ENCODE measurements at regions of chr11 and their contacts with region 1.

Region 1: GRCh38 chr11:35305670-35306382 is 113.5 kb downstream of the SLC1A2 start:
- DNase-seq: peak in 4 of 5 donors; percentile 35 to 49 (median 44)
- H3K4me3 ChIP-seq: no peak overlapping the region
- H3K4me3 Mint-ChIP-seq: peak overlapping the region; percentile 58 to 85 (median 79)
- H3K27ac ChIP-seq: no peak overlapping the region
- H3K27ac Mint-ChIP-seq: peak overlapping the region; percentile 8 to 95 (median 90)
- H3K4me1 ChIP-seq: peaks cover 24% of the 10 kb centered on the region
- H3K4me1 Mint-ChIP-seq: peaks cover 15 to 29% (median 25%) of the 10 kb centered on the region in 4 donors
- H3K27me3 ChIP-seq: no peaks in the 10 kb centered on the region
- H3K27me3 Mint-ChIP-seq: no peaks in the 10 kb centered on the region

Region 2: DNA sequence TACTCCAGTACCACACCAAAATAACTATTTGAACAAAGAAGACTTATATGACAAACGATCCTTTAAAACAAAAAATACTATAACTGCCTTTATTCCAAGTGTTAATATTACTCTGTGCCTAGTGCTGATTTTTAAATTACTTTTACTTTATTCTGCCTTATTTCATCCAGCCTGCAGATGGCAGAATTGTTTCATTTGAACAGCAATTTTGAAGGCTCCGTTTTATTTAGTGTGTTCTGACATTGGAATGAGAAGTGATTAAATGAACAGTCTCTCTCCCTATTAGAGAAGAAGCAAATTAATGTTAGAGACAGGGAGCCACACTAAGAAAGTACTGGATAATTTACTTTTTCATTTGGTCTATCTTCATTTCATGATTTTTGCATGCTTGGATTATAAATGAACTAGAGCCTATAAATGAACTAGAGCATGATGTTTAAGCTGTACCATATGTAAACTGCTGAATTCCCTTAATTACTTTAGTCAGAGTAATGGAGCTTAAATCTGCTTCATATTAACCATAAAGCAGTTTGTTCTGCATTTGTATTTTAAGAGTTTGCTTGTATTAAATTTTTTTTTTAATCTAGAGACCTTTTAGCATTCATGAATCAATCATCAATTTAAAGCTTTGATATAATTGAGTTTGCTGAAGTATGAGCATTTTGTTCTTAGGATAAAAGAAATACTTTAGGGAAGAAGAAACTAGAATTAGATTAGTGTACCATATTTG is 379.6 kb before region 1 on chr11:
- CTCF ChIA-PET with region 1: interaction called, 101 read pairs
- POLR2A ChIA-PET with region 1: interaction called, 4 read pairs
- intact Hi-C with region 1: loop called (anchors 1 kb)
- DNase-seq: peak in 4 of 5 donors; percentile 49 to 57 (median 54)
- H3K4me3 ChIP-seq: no peak overlapping the region
- H3K4me3 Mint-ChIP-seq: no peak overlapping the region
- H3K27ac ChIP-seq: no peak overlapping the region
- H3K27ac Mint-ChIP-seq: peak overlapping the region in 1 of 7 donors; percentile 78
- H3K4me1 ChIP-seq: no peaks in the 10 kb centered on the region
- H3K4me1 Mint-ChIP-seq: peaks cover 8 to 25% (median 15%) of the 10 kb centered on the region in 4 donors
- H3K27me3 ChIP-seq: no peaks in the 10 kb centered on the region
- H3K27me3 Mint-ChIP-seq: no peaks in the 10 kb centered on the region

Region 3: GRCh38 chr11:35158701-35159510 is 146.9 kb before region 1 on chr11:
- CTCF ChIA-PET with region 1: interaction called, 12 read pairs
- POLR2A ChIA-PET with region 1: interaction called, 4 read pairs
- intact Hi-C with region 1: loop called (anchors 5 kb)
- DNase-seq: peak in 1 of 5 donors; percentile 22
- H3K4me3 ChIP-seq: peak overlapping the region in 1 of 2 donors; percentile 8
- H3K4me3 Mint-ChIP-seq: peak overlapping the region; percentile 51 to 87 (median 70)
- H3K27ac ChIP-seq: peak overlapping the region; percentile 96
- H3K27ac Mint-ChIP-seq: peak overlapping the region; percentile 89 to 100 (median 100)
- H3K4me1 ChIP-seq: peaks cover 100% of the 10 kb centered on the region
- H3K4me1 Mint-ChIP-seq: peaks cover 93 to 100% (median 97%) of the 10 kb centered on the region in 4 donors
- H3K27me3 ChIP-seq: no peaks in the 10 kb centered on the region
- H3K27me3 Mint-ChIP-seq: no peaks in the 10 kb centered on the region

Region 4: DNA sequence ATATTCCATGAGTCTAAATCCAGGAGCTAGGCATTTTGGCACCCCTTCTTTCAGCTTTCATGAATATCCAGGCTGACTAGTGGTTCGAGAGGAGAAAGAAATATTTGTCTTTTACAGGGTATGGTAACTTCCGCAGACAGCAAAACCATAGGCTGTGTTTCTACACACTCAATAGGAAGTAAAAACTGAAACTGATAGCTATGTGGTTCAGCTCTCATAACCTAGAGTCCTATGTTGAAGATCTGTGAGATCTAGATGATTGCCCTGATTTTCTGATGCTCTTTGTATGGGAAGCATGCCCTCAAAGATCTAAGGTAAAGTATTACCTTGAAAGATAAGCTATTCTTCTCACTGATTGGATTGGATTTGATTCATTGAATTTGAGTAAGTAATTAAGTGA is 48.5 kb before region 1 on chr11:
- CTCF ChIA-PET with region 1: interaction called, 25 read pairs
- POLR2A ChIA-PET with region 1: interaction called, 4 read pairs
- intact Hi-C with region 1: no loop called
- DNase-seq: peak in 4 of 5 donors; percentile 27 to 51 (median 39)
- H3K4me3 ChIP-seq: peak overlapping the region in 1 of 2 donors; percentile 20
- H3K4me3 Mint-ChIP-seq: peak overlapping the region in 7 of 8 donors; percentile 43 to 79 (median 62)
- H3K27ac ChIP-seq: no peak overlapping the region
- H3K27ac Mint-ChIP-seq: peak overlapping the region; percentile 4 to 96 (median 94)
- H3K4me1 ChIP-seq: peaks cover 26% of the 10 kb centered on the region
- H3K4me1 Mint-ChIP-seq: peaks cover 19 to 39% (median 24%) of the 10 kb centered on the region in 4 donors
- H3K27me3 ChIP-seq: no peaks in the 10 kb centered on the region
- H3K27me3 Mint-ChIP-seq: peaks cover 0 to 1% of the 10 kb centered on the region in 2 donors

Region 5: GRCh38 chr11:35288817-35289541 is 16.8 kb before region 1 on chr11:
- CTCF ChIA-PET with region 1: interaction called, 20 read pairs
- POLR2A ChIA-PET with region 1: interaction called, 3 read pairs
- intact Hi-C with region 1: no loop called
- DNase-seq: no peak
- H3K4me3 ChIP-seq: no peak overlapping the region
- H3K4me3 Mint-ChIP-seq: no peak overlapping the region
- H3K27ac ChIP-seq: no peak overlapping the region
- H3K27ac Mint-ChIP-seq: no peak overlapping the region
- H3K4me1 ChIP-seq: peaks cover 8% of the 10 kb centered on the region
- H3K4me1 Mint-ChIP-seq: peaks cover 4 to 17% (median 12%) of the 10 kb centered on the region in 4 donors
- H3K27me3 ChIP-seq: no peaks in the 10 kb centered on the region
- H3K27me3 Mint-ChIP-seq: no peaks in the 10 kb centered on the region

Region 6: DNA sequence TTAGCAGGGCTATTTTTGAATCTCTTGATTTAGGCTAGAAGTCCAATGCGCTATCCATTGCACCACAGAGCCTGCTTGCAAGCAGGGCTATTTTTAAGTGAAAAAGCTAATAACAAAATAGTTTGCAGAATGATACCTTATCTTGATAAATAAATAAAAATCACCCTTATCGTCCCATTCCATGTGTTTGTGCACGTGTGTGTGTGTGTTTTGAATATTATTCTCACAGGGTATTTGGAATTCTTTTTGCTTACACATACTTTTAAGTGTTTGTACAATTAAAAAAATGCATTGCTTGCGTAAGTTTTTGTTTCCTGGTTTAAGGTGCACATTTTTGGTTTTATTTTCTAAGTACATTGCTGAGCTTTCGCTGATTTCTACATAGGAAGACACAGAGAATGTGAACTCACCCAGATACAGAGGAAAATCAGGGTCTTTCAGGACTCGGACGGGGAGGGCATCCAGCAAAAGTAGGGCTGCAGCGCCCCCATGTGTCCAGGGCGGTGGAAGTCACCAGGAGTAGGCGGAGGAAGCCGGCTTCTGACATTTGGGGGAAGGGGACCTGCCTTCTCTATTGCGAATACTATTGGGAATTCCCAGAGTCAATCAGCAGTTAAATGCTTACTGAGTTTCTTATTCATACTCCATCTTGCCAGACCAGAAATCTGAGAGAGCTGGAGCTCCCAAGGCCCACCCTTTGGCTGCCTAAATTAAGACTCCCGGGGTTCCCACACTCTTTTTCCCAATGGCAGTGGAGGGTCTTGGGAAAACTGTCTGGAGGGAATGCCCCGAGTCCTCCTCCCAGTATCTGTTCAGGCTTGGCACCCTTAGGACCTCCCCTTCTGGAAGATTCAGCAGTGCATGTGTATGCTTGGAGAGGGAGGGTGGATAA is 86.3 kb after region 1 on chr11:
- CTCF ChIA-PET with region 1: interaction called, 82 read pairs
- POLR2A ChIA-PET with region 1: no interaction called
- intact Hi-C with region 1: loop called (anchors 1 kb)
- DNase-seq: peak; percentile 74 to 82 (median 78)
- H3K4me3 ChIP-seq: peak overlapping the region in 1 of 2 donors; percentile 16
- H3K4me3 Mint-ChIP-seq: peak overlapping the region; percentile 22 to 79 (median 64)
- H3K27ac ChIP-seq: no peak overlapping the region
- H3K27ac Mint-ChIP-seq: peak overlapping the region in 5 of 7 donors; percentile 5 to 74 (median 47)
- H3K4me1 ChIP-seq: peaks cover 19% of the 10 kb centered on the region
- H3K4me1 Mint-ChIP-seq: peaks cover 13 to 27% (median 19%) of the 10 kb centered on the region in 4 donors
- H3K27me3 ChIP-seq: no peaks in the 10 kb centered on the region
- H3K27me3 Mint-ChIP-seq: no peaks in the 10 kb centered on the region